CD8-positive, alpha-beta T cell (primary cell): ENCODE measurements at regions of chr22 and their contacts with region 1.

Region 1: GRCh38 chr22:23178512-23179254 is 1.6 kb upstream of the BCR start:
- DNase-seq: peak; percentile 35 to 81 (median 70)
- ATAC-seq: peak; percentile 31
- H3K4me3 ChIP-seq: no peak overlapping the region
- H3K4me3 Mint-ChIP-seq: peak overlapping the region; percentile 82
- H3K27ac ChIP-seq: no peak overlapping the region
- H3K27ac Mint-ChIP-seq: peak overlapping the region; percentile 71
- H3K4me1 ChIP-seq: peaks cover 40% of the 10 kb centered on the region
- H3K4me1 Mint-ChIP-seq: peaks cover 46% of the 10 kb centered on the region
- H3K27me3 ChIP-seq: no peaks in the 10 kb centered on the region
- H3K27me3 Mint-ChIP-seq: no peaks in the 10 kb centered on the region
- CTCF ChIP-seq: peak; percentile 98

Region 2: GRCh38 chr22:23137905-23138561 is 40.6 kb before region 1 on chr22:
- CTCF ChIA-PET with region 1: interaction called, 13 read pairs
- POLR2A ChIA-PET with region 1: no interaction called
- intact Hi-C with region 1: loop called (anchors 1 kb)
- DNase-seq: peak in 8 of 9 experiments; percentile 34 to 93 (median 65)
- ATAC-seq: peak; percentile 43
- H3K4me3 ChIP-seq: no peak overlapping the region
- H3K4me3 Mint-ChIP-seq: peak overlapping the region; percentile 61
- H3K27ac ChIP-seq: peak overlapping the region; percentile 55 to 88
- H3K27ac Mint-ChIP-seq: peak overlapping the region; percentile 94
- H3K4me1 ChIP-seq: peaks cover 61% of the 10 kb centered on the region
- H3K4me1 Mint-ChIP-seq: peaks cover 62% of the 10 kb centered on the region
- H3K27me3 ChIP-seq: no peaks in the 10 kb centered on the region
- H3K27me3 Mint-ChIP-seq: no peaks in the 10 kb centered on the region
- CTCF ChIP-seq: no peak

Region 3: DNA sequence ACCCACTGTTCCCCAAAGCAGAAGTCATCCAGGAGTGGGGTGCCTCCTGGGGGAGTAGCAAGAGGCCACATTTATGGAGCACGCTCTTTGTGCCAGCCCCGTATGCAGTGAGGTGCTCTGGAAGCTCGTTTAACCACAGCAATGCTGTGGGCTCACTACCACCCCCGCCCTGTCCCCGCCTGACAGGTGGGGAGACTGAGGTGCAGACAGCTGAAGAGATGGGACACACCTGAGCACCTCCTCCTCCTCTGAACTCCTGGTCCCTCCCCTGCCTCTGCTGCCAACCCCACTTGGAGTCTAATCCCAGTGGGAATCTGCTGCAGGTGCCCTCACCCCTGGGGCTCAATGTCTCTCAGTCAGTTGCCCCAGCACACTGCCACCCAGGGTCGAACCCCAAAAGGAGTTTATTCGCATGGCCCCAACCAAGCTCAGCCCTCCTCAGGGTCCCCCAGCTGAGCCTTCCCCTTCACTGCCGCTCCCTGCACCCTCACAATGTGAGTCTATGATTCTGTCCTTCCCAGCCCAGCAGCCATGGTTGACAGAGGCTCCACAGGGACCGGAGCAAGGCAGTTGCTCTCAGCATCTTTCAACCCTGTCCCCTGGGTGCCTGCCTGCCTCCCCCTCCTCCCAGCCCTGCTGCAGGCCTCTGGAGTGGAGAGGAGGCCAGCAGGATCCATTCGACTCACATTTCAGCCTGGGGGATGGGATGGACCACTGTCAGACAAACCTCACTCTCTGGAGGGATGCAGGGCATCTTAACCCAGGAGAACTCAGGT is 11.7 kb before region 1 on chr22:
- CTCF ChIA-PET with region 1: interaction called, 14 read pairs
- POLR2A ChIA-PET with region 1: no interaction called
- intact Hi-C with region 1: no loop called
- DNase-seq: no peak
- ATAC-seq: no peak
- H3K4me3 ChIP-seq: no peak overlapping the region
- H3K4me3 Mint-ChIP-seq: no peak overlapping the region
- H3K27ac ChIP-seq: no peak overlapping the region
- H3K27ac Mint-ChIP-seq: no peak overlapping the region
- H3K4me1 ChIP-seq: no peaks in the 10 kb centered on the region
- H3K4me1 Mint-ChIP-seq: no peaks in the 10 kb centered on the region
- H3K27me3 ChIP-seq: no peaks in the 10 kb centered on the region
- H3K27me3 Mint-ChIP-seq: no peaks in the 10 kb centered on the region
- CTCF ChIP-seq: no peak

Region 4: GRCh38 chr22:23243006-23243573 is 64.4 kb after region 1 on chr22:
- CTCF ChIA-PET with region 1: interaction called, 5 read pairs
- POLR2A ChIA-PET with region 1: interaction called, 11 read pairs
- intact Hi-C with region 1: loop called (anchors 1 to 2 kb)
- DNase-seq: peak; percentile 50 to 91 (median 70)
- ATAC-seq: peak; percentile 94
- H3K4me3 ChIP-seq: peak overlapping the region; percentile 26 to 41
- H3K4me3 Mint-ChIP-seq: peak overlapping the region; percentile 69
- H3K27ac ChIP-seq: peak overlapping the region; percentile 59 to 82
- H3K27ac Mint-ChIP-seq: peak overlapping the region; percentile 90
- H3K4me1 ChIP-seq: peaks cover 81% of the 10 kb centered on the region
- H3K4me1 Mint-ChIP-seq: peaks cover 69% of the 10 kb centered on the region
- H3K27me3 ChIP-seq: no peaks in the 10 kb centered on the region
- H3K27me3 Mint-ChIP-seq: no peaks in the 10 kb centered on the region
- CTCF ChIP-seq: no peak

Region 5: GRCh38 chr22:23263651-23264555 is 85.2 kb after region 1 on chr22:
- CTCF ChIA-PET with region 1: interaction called, 14 read pairs
- POLR2A ChIA-PET with region 1: no interaction called
- intact Hi-C with region 1: loop called in 1 of 2 experiments (anchors 5 kb)
- DNase-seq: peak; percentile 30 to 92 (median 65)
- ATAC-seq: peak; percentile 90
- H3K4me3 ChIP-seq: no peak overlapping the region
- H3K4me3 Mint-ChIP-seq: no peak overlapping the region
- H3K27ac ChIP-seq: peak overlapping the region; percentile 49 to 82
- H3K27ac Mint-ChIP-seq: peak overlapping the region; percentile 87
- H3K4me1 ChIP-seq: peaks cover 5% of the 10 kb centered on the region
- H3K4me1 Mint-ChIP-seq: peaks cover 6% of the 10 kb centered on the region
- H3K27me3 ChIP-seq: no peaks in the 10 kb centered on the region
- H3K27me3 Mint-ChIP-seq: no peaks in the 10 kb centered on the region
- CTCF ChIP-seq: no peak

Region 6: DNA sequence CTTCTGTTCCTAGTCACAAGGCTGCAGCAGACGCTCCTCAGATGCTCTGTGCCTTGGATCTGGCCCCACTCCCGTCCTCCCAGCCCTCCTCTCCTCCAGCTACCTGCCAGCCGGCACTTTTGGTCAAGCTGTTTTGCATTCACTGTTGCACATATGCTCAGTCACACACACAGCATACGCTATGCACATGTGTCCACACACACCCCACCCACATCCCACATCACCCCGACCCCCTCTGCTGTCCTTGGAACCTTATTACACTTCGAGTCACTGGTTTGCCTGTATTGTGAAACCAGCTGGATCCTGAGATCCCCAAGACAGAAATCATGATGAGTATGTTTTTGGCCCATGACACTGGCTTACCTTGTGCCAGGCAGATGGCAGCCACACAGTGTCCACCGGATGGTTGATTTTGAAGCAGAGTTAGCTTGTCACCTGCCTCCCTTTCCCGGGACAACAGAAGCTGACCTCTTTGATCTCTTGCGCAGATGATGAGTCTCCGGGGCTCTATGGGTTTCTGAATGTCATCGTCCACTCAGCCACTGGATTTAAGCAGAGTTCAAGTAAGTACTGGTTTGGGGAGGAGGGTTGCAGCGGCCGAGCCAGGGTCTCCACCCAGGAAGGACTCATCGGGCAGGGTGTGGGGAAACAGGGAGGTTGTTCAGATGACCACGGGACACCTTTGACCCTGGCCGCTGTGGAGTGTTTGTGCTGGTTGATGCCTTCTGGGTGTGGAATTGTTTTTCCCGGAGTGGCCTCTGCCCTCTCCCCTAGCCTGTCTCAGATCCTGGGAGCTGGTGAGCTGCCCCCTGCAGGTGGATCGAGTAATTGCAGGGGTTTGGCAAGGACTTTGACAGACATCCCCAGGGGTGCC is 111.4 kb after region 1 on chr22:
- CTCF ChIA-PET with region 1: interaction called, 54 read pairs
- POLR2A ChIA-PET with region 1: no interaction called
- intact Hi-C with region 1: no loop called
- DNase-seq: peak; percentile 24 to 73 (median 54)
- ATAC-seq: peak; percentile 84
- H3K4me3 ChIP-seq: no peak overlapping the region
- H3K4me3 Mint-ChIP-seq: no peak overlapping the region
- H3K27ac ChIP-seq: no peak overlapping the region
- H3K27ac Mint-ChIP-seq: peak overlapping the region; percentile 37
- H3K4me1 ChIP-seq: no peaks in the 10 kb centered on the region
- H3K4me1 Mint-ChIP-seq: no peaks in the 10 kb centered on the region
- H3K27me3 ChIP-seq: no peaks in the 10 kb centered on the region
- H3K27me3 Mint-ChIP-seq: no peaks in the 10 kb centered on the region
- CTCF ChIP-seq: peak; percentile 78

Region 7: DNA sequence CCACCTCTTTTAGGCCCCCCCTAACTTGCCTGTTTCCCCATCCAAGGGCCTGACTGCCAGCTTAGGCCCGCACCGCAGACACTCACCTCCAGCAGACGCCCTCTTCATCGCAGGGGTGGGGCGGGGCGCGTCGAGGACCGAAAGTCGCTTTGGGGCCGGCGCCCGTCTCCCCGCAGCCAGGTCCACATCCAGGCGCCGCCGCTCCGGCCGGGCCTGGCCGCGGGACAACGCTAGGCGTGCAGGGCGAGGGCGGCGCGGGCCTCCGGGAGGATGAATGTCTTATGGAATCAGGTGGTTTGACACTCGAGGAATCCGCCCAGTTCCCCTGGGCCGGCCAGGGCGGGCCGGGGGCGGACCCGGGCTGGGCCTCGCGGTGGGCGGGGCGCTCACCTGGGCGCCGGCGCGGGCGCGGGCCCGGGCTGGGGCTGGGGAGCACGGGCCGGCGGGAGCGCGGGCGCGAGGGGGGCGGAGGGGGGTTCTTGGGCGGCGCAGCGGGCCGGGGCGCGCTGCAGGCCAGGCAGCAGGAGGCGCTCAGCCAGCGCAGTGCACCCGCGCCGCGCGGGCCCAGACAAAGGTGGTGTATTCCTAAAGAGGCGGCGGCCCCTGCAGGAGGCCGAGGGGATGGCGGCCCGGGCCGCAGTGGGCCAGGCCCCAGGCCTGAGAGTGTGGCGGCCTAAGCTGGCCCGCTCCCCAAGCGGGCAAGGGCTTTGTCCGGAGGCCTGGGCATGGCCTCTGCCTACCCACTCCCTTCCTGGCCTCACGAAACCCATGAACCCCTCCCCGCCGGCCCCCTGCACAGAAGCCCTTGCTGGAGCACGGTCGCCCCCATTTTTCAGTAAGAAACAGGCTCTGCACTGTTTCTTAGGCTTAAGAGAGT is 223.8 kb after region 1 on chr22:
- CTCF ChIA-PET with region 1: no interaction called
- POLR2A ChIA-PET with region 1: no interaction called
- intact Hi-C with region 1: no loop called
- DNase-seq: peak in 8 of 9 experiments; percentile 21 to 69 (median 48)
- ATAC-seq: peak; percentile 88
- H3K4me3 ChIP-seq: no peak overlapping the region
- H3K4me3 Mint-ChIP-seq: peak overlapping the region; percentile 45
- H3K27ac ChIP-seq: no peak overlapping the region
- H3K27ac Mint-ChIP-seq: no peak overlapping the region
- H3K4me1 ChIP-seq: no peaks in the 10 kb centered on the region
- H3K4me1 Mint-ChIP-seq: no peaks in the 10 kb centered on the region
- H3K27me3 ChIP-seq: no peaks in the 10 kb centered on the region
- H3K27me3 Mint-ChIP-seq: no peaks in the 10 kb centered on the region
- CTCF ChIP-seq: peak; percentile 35